Activated CD4-positive, alpha-beta memory T cell treated with anti-CD3 and anti-CD28 coated beads for 36 hours (primary cell): ENCODE measurements at regions of chr7 and their contacts with region 1.

Region 1: DNA sequence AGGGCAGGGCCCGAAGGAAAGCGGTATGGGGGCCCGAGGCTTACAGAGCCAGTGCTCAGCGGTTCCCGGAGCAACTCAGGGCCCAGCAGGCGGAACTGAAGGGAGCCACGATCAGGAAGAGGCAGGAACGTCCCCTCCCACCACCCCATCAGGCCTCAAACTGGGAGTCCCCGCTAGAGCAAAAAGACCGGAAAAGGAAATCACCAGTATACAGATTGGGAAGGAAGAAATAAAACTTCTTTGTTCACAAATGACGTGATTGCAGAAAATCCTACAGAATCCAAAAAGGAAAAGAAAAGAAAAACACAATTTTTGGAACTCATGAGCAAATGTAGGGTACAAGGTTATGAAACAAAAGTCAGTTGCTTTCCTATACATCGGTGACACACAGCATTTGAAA is 21.6 kb upstream of the ZFAND2A start:
- DNase-seq: no peak
- H3K4me3 Mint-ChIP-seq: no peak overlapping the region
- H3K27ac Mint-ChIP-seq: no peak overlapping the region
- H3K4me1 Mint-ChIP-seq: peaks cover 4% of the 10 kb centered on the region
- H3K27me3 Mint-ChIP-seq: peaks cover 20% of the 10 kb centered on the region

Region 2: DNA sequence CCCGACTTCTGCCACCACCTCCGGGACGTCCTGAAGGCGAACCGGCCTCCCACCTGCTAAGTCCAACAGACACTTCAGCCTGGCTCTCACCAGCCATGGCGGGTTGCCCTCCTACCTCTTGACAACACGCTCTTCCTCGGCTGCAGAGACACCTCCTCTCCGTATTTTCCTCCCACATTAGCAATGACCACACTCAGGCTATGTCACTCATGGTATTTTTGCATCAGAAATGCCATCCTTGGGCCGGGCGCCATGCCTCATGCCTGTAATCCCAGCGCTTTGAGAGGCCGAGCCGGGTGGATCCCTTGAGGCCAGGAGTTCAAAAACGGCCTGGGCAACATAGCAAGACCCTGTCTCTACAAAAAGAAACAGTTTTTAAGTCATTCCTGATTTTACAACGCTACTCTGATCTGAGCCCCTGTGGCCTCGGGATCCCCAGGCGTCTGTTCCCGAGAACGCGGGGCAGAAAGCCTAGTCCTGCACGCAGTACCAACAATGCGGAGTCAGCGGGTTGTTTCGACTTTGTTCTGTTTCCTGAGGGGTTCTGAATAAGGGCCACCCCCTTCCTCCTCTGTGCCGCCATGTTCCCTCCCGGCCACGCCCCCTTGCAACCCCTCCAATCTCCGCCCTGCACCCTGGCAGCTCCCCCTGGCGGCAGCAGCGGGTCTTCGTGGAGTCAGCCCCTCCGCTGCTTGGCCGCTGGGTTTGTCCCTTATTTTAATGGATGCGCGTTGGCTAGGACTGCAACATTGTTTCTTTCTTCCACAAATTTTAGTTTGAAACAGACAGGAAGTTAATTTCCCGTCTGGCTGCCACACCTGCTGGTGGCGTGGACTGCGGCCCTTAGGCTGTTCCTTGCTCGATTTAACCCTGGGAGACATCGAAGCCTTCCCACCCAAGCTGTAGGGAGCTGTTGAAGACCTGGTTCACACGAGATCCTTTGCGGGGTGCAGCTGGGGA is 12.0 kb before region 1 on chr7:
- CTCF ChIA-PET with region 1: interaction called, 15 read pairs
- POLR2A ChIA-PET with region 1: no interaction called
- intact Hi-C with region 1: no loop called
- DNase-seq: peak; percentile 98
- H3K4me3 Mint-ChIP-seq: peak overlapping the region; percentile 85
- H3K27ac Mint-ChIP-seq: peak overlapping the region; percentile 91
- H3K4me1 Mint-ChIP-seq: peaks cover 13% of the 10 kb centered on the region
- H3K27me3 Mint-ChIP-seq: no peaks in the 10 kb centered on the region

Region 3: GRCh38 chr7:1193593-1194424 is 12.2 kb after region 1 on chr7:
- CTCF ChIA-PET with region 1: interaction called, 24 read pairs
- POLR2A ChIA-PET with region 1: interaction called, 3 read pairs
- intact Hi-C with region 1: no loop called
- DNase-seq: peak; percentile 59
- H3K4me3 Mint-ChIP-seq: no peak overlapping the region
- H3K27ac Mint-ChIP-seq: no peak overlapping the region
- H3K4me1 Mint-ChIP-seq: peaks cover 7% of the 10 kb centered on the region
- H3K27me3 Mint-ChIP-seq: peaks cover 12% of the 10 kb centered on the region